ENCODE measurements at regions of chr10 and their contacts with region 1.

Region 1: DNA sequence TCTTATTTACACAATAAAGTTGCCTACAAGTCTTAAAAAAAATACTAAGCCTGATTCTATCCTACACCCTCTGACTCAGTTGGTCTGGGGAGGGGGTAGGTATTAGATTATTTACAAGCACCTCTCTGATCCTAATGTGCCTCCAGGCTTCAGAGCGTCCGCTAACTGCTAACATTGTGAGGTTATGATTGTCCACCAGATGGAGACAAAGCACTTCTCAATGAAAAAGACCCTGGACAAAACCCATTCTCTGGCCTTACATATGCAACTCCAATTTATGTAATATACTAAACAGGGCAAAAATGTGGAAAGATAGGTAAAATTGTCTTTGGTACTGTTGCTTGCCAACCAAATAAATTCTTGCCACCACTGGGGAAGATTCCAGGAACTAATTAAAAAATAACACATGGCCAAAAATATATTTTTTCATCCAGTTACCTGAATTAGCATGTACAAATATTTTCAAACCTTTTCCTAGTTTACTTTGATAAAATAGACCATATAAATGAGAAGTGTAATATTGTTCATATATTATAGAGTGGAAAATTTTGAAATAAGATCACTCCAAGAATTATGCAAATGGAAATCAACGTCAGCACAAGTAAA is 92.4 kb downstream of the KIF20B start:
- DNase-seq: no peak

Region 2: DNA sequence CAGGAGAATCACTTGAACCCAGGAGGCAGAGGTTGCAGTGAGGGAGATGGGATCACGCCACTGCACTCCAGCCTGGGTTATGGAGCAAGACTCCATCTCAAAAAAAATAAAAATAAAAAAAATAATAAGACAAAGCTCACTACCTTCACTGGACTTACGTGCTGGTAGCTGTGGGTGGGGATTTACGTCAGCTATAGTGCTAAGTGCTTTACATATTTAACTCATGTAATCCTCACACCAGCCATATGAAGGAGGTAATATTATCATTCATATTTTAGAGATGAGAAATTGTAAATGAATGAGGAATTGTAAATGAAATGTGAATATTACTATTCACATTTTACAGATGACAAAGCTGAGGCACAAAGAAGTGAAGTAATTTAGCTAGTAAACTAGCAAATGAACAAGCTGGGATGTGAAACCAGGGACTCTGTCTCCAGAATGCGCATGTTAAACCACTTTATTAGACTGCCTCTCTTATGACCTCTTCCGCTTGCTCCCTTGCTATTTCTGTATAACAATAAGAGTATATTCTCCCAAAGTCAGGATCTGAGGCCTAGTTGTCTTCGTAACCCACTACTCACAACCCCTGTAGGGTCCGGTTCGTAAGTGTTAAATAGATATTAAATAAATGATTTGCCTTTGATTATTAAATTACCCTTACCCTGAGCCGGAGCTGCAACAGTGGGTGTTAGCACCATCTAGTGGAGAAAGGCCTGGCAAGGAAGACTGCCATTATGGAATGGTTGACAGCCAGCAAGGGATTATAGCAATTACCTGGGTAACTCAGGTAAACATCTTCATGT is 993.8 kb after region 1 on chr10:
- intact Hi-C with region 1: loop called (anchors 5 kb)
- DNase-seq: no peak

Region 3: DNA sequence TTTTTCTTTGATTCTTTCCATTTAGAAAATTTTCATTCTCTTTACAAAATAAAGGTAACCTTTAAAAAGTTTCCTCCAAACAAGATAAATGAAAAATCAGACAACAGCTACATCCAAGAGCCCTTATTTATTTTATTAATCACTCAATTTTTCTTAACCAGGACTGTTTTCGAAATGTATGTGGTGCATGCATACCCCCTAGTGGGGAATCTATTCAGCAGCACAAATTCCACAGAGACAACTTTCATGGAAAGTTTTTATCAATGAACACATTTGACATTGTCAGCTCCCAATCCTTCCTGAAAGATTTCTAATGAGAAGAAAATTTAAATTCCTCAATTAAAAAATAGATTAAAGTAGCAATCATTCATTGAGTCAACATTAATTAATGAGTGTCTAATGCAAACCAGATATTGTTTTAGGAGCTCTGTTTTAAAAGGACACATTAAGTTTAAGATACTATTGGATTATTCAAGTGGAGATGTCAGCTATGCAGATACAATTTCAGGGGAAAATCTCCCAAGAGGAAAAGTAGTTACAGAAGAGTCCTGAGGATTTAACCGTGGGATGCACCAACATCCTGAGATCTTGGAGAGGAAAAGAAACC is 1069.3 kb after region 1 on chr10:
- intact Hi-C with region 1: loop called (anchors 10 kb)
- DNase-seq: no peak